ENCODE measurements at regions of chr9 and their contacts with region 1.

Region 1: GRCh38 chr9:107637421-107638420 is 148.2 kb upstream of the KLF4 start:
- DNase-seq: peak; percentile 98
- H3K4me3 ChIP-seq: peak overlapping the region; percentile 50 to 62 (median 61)
- H3K27ac ChIP-seq: peak overlapping the region; percentile 97 to 98 (median 98)
- H3K4me1 ChIP-seq: peaks cover 22 to 32% (median 26%) of the 10 kb centered on the region in 4 donors
- H3K27me3 ChIP-seq: no peaks in the 10 kb centered on the region
- CTCF ChIP-seq: peak; percentile 11 to 52 (median 20)
- EP300 ChIP-seq: peak; percentile 53
- POLR2A ChIP-seq: peak; percentile 98

Region 2: GRCh38 chr9:107513464-107514100 is 124.1 kb before region 1 on chr9:
- intact Hi-C with region 1: no loop called
- DNase-seq: no peak
- H3K4me3 ChIP-seq: no peak overlapping the region
- H3K27ac ChIP-seq: no peak overlapping the region
- H3K4me1 ChIP-seq: no peaks in the 10 kb centered on the region
- H3K27me3 ChIP-seq: no peaks in the 10 kb centered on the region
- CTCF ChIP-seq: no peak
- EP300 ChIP-seq: no peak
- POLR2A ChIP-seq: no peak

Region 3: DNA sequence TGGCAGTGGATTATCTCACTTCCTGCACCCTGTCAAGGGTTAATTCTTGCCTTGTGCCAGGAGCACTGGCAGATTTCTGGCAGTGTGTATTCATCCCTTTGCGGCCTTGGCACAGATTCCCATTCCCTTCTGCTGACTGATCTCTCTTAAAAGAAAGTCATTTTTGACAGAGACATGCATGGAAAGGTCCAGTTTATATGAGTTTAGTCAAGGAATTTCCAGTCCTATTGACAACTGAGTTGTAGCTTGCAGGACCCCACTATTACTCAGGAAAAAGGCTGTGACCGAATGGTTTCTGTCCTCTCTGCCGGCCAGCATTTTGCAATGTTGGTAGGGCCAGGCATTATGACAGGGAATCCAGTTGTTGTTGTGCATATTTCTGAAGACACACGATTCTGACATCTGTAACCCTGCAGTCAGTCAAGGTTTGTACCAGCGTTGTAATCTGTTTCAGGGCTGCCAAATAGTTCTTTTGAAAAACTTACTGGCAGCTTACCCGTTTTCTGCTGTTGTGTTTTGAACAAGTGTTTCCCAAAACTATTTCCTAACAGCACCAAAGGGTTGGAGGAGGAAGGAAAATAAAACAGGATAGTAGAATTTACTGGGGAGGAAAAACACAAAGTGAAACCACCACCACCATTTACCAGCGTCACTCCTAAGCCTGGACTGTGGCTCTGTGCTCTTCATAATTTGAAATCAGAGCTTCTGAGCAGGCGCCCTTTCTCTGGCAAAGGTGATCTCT is 95.2 kb after region 1 on chr9:
- intact Hi-C with region 1: loop called (anchors 2 kb)
- DNase-seq: no peak
- H3K4me3 ChIP-seq: peak overlapping the region; percentile 8 to 38 (median 23)
- H3K27ac ChIP-seq: peak overlapping the region; percentile 72 to 81 (median 78)
- H3K4me1 ChIP-seq: peaks cover 18 to 41% (median 38%) of the 10 kb centered on the region in 4 donors
- H3K27me3 ChIP-seq: no peaks in the 10 kb centered on the region
- CTCF ChIP-seq: no peak
- EP300 ChIP-seq: no peak
- POLR2A ChIP-seq: no peak

Region 4: GRCh38 chr9:107749787-107750444 is 112.2 kb after region 1 on chr9:
- intact Hi-C with region 1: loop called (anchors 2 kb)
- DNase-seq: no peak
- H3K4me3 ChIP-seq: no peak overlapping the region
- H3K27ac ChIP-seq: peak overlapping the region; percentile 86 to 88 (median 86)
- H3K4me1 ChIP-seq: peaks cover 30 to 52% (median 42%) of the 10 kb centered on the region in 4 donors
- H3K27me3 ChIP-seq: no peaks in the 10 kb centered on the region
- CTCF ChIP-seq: no peak
- EP300 ChIP-seq: no peak
- POLR2A ChIP-seq: no peak

Region 5: DNA sequence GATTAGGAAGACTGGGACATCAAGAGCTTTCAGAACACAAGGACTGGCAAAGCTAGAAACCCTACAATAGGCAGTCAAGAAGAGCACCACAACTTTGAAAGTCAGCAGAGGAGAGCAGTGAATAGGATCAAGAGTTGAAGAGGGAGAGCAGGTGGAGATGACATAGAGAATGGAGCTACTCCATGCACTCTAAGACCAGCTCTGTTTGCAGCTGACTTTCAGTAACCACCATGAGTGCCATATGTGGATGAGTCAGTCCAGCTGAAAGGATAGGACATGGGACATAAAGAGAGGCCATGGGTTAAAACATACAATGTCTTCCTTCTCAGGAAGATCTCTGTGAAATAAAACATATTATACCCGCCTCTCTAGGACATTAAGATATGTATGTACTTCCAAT is 140.9 kb after region 1 on chr9:
- intact Hi-C with region 1: no loop called
- DNase-seq: no peak
- H3K4me3 ChIP-seq: no peak overlapping the region
- H3K27ac ChIP-seq: no peak overlapping the region
- H3K4me1 ChIP-seq: peaks cover 0 to 5% (median 0%) of the 10 kb centered on the region in 4 donors
- H3K27me3 ChIP-seq: no peaks in the 10 kb centered on the region
- CTCF ChIP-seq: no peak
- EP300 ChIP-seq: no peak
- POLR2A ChIP-seq: no peak

Region 6: DNA sequence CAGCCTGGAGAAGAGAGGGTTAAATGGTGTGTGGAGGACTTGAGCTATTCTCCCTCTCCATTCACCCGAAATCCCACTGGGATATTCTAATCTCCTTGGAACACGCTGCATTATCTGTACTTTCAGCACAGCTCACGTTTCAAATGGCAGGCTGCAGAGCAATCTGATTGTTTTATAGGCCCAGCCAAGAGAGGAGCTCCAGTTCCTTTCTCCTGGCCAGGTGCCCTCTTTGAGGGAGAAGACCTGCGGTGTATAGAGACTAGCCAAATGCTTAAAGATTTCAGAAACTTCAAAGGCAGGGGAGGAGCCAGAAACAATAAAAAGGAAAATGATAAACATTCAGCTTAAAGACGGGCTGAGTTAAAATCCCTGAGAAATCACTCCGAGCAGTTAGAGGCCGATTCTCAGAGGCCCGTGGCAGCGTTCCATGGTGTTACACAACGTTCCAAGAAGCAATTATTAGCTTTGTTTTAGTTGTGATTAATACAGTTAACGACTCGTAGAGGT is 415.9 kb after region 1 on chr9:
- intact Hi-C with region 1: loop called (anchors 5 kb)
- DNase-seq: no peak
- H3K4me3 ChIP-seq: peak overlapping the region in 3 of 4 donors; percentile 14 to 22 (median 16)
- H3K27ac ChIP-seq: peak overlapping the region; percentile 66 to 76 (median 72)
- H3K4me1 ChIP-seq: peaks cover 19 to 53% (median 52%) of the 10 kb centered on the region in 4 donors
- H3K27me3 ChIP-seq: no peaks in the 10 kb centered on the region
- CTCF ChIP-seq: no peak
- EP300 ChIP-seq: no peak
- POLR2A ChIP-seq: no peak

Region 7: GRCh38 chr9:108142504-108143201 is 504.9 kb after region 1 on chr9:
- intact Hi-C with region 1: loop called (anchors 5 kb)
- DNase-seq: peak; percentile 96
- H3K4me3 ChIP-seq: no peak overlapping the region
- H3K27ac ChIP-seq: peak overlapping the region; percentile 84 to 93 (median 89)
- H3K4me1 ChIP-seq: peaks cover 24 to 35% (median 29%) of the 10 kb centered on the region in 4 donors
- H3K27me3 ChIP-seq: no peaks in the 10 kb centered on the region
- CTCF ChIP-seq: peak in 2 of 3 experiments; percentile 12 to 41
- EP300 ChIP-seq: peak; percentile 96
- POLR2A ChIP-seq: no peak